Right ventricle myocardium superior (tissue), 1 donor: ENCODE measurements at regions of chr18 and their contacts with region 1.

Region 1: GRCh38 chr18:2104620-2105462 is 466.5 kb downstream of the METTL4 start:
- DNase-seq: peak; percentile 57
- ATAC-seq: peak; percentile 78

Region 2: GRCh38 chr18:2223849-2224248 is 119.0 kb after region 1 on chr18:
- intact Hi-C with region 1: loop called (anchors 10 kb)
- DNase-seq: no peak
- ATAC-seq: peak; percentile 63

Region 3: DNA sequence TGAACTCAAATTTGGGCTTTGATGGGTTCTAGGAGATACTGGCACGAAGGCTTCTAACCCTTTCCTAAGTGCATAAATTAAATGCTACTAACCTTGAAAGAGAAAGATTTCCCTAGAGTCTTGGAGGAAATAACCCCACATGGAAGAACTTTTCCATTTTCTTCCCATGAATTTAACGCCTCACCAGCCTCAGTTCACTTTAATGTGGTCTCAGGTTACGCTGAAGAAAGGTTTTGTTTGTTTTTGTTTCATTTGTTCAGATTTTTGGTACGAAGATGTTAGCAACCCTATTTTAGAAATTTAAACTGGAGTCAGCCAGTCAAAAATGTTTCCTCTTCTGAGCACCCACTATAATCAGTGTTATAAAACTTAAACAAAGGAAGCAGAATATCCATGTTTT is 435.7 kb after region 1 on chr18:
- intact Hi-C with region 1: loop called (anchors 5 kb)
- DNase-seq: no peak
- ATAC-seq: no peak